Transverse colon (tissue), 4 donors: ENCODE measurements at regions of chr6 and their contacts with region 1.

Region 1: DNA sequence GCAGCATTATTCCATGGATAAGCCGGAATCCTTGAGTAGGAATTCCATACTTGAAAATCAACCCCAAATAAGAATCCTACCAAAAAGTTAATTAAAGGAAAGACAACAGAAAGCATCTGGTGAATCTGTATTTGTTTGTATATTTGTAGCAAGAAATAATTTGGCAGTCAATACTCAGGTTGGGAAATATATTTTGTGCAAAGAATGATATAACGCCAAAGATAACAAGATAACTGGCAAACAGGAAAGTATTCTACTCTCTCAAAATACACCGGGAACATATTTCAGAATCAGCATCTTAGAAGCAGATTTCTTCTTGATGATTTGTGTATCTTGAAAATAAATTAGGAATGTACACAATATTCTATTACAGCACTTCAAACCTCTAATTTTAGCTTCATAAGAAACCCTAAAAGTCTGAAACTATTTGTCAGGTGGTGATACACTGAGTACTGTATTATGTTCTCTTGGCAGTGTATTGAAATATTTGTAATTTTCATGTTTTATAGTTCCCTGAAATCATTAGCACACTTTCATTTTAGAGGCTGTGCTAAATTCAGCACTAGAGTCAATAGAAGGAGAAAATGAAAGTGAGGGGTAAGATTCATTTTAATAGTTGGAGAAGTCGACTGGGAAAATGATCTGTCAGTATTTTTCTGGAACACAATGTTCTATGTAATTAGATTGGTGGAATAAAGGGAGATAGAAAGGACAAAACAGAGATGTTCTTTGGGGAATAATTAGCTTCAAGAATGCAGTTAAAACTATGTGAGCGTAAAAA is 879.7 kb upstream of the GJE1 start:
- DNase-seq: no peak
- H3K4me3 ChIP-seq: no peak overlapping the region
- H3K27ac ChIP-seq: peak overlapping the region in 2 of 4 donors; percentile 2 to 20
- H3K4me1 ChIP-seq: peaks cover 0 to 4% (median 0%) of the 10 kb centered on the region in 4 donors
- H3K27me3 ChIP-seq: no peaks in the 10 kb centered on the region
- CTCF ChIP-seq: no peak
- EP300 ChIP-seq: no peak
- POLR2A ChIP-seq: no peak

Region 2: DNA sequence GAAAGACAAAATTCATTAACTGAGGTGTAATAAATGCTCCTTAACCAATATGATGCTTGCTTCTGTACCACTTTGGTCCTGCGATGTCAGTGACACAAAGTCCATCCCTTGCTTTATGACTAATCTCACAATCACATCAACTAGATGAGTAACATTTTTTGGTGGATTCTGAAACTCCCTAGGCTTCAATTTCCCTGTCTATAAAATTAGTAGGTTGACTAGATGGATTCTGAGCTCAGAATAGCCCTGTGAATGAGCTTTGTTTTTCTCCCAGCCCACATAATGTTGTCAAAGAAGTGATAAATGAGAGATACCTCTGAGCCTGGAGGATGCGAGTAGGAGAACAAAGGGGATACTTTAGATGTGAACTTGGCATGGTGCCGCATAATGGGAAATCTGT is 1970.3 kb before region 1 on chr6:
- in situ Hi-C with region 1: no loop called
- intact Hi-C with region 1: loop called (anchors 5 kb)
- DNase-seq: no peak
- H3K4me3 ChIP-seq: no peak overlapping the region
- H3K27ac ChIP-seq: no peak overlapping the region
- H3K4me1 ChIP-seq: no peaks in the 10 kb centered on the region
- H3K27me3 ChIP-seq: no peaks in the 10 kb centered on the region
- CTCF ChIP-seq: no peak
- EP300 ChIP-seq: no peak
- POLR2A ChIP-seq: no peak

Region 3: GRCh38 chr6:141562851-141563763 is 310.1 kb after region 1 on chr6:
- in situ Hi-C with region 1: no loop called
- intact Hi-C with region 1: no loop called
- DNase-seq: peak; percentile 49
- H3K4me3 ChIP-seq: peak overlapping the region in 1 of 4 donors; percentile 25
- H3K27ac ChIP-seq: peak overlapping the region in 1 of 4 donors; percentile 9
- H3K4me1 ChIP-seq: peaks cover 0 to 9% (median 4%) of the 10 kb centered on the region in 4 donors
- H3K27me3 ChIP-seq: no peaks in the 10 kb centered on the region
- CTCF ChIP-seq: peak; percentile 72 to 88 (median 78)
- EP300 ChIP-seq: no peak
- POLR2A ChIP-seq: no peak